ENCODE measurements at regions of chr13 and their contacts with region 1.

Region 1: DNA sequence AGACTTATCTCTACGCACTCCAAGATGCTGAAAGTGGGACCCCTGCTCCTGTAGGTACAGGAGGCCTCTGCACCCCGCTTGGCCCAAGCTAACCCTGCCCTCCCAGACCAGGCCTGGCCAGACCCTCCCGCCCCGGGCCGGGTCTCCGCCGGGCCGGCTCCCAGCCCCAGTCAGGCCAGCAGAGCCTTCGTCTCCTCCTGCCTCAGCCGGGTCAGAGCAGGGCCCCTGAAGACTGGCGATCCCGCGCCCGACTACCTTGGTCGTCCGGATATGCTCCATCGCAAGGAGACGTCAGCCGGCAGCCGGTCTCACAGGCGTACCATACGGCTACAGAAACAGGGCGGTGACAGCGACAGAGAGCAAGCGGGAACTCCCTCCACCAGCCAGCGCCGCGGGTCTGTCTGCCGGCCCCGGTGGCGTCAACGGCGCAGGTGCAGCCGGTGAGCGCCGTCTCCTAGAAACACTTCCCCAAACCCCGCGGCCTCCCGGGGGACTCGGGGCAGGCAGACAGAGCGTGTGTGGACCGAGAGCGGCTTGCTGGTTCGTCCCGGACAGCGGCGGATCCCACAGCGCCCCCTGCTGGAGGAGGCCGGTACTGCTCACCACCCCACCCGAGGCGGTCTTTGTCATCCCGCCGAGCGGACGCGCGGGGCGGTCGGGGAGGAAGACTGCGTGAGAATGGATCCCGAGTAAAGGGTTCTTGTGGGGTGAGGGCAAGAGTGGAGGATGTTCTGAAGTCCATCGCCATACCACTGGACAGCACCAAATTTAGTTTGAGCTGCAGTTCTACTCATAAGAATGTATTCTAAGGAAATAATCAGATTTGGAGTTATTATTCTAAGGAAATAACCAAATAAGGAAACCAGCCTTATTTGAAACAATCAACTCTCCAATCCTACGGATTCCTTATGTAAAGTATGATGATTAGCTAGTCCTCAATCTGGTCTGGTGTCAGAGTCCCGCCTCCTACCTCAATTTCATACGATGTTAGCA is at the start of gene MTMR6:
- DNase-seq: peak; percentile 95 to 99
- ATAC-seq: peak; percentile 100
- H3K4me3 ChIP-seq: peak within 1 kb of the TSS; percentile 77 to 95
- H3K27ac ChIP-seq: peak within 1 kb of the TSS in 1 of 2 donors; percentile 60
- H3K4me1 ChIP-seq: peaks cover 0 to 3% of the 10 kb centered on the region in 2 donors
- H3K27me3 ChIP-seq: peaks cover 0 to 2% of the 10 kb centered on the region in 2 donors
- total RNA-seq, gene MTMR6: 18.2 to 20.7 TPM

Region 2: GRCh38 chr13:25262261-25262660 is 25.0 kb before region 1 on chr13:
- intact Hi-C with region 1: loop called in 1 of 2 experiments (anchors 2 kb)
- DNase-seq: no peak
- ATAC-seq: no peak
- H3K4me3 ChIP-seq: no peak overlapping the region
- H3K27ac ChIP-seq: no peak overlapping the region
- H3K4me1 ChIP-seq: no peaks in the 10 kb centered on the region
- H3K27me3 ChIP-seq: no peaks in the 10 kb centered on the region

Region 3: GRCh38 chr13:25301347-25302047 is 14.2 kb after region 1 on chr13 and contains the start of gene NUP58:
- intact Hi-C with region 1: loop called in 1 of 2 experiments (anchors 1 kb)
- DNase-seq: peak; percentile 98
- ATAC-seq: peak; percentile 100
- H3K4me3 ChIP-seq: peak within 1 kb of the TSS; percentile 65 to 73
- H3K27ac ChIP-seq: peak within 1 kb of the TSS in 1 of 2 donors; percentile 96
- H3K4me1 ChIP-seq: peaks cover 0 to 2% of the 10 kb centered on the region in 2 donors
- H3K27me3 ChIP-seq: no peaks in the 10 kb centered on the region
- total RNA-seq, gene NUP58: 36.5 to 43.1 TPM

Region 4: GRCh38 chr13:25406377-25406915 is 119.2 kb after region 1 on chr13:
- intact Hi-C with region 1: no loop called
- DNase-seq: no peak
- ATAC-seq: no peak
- H3K4me3 ChIP-seq: no peak overlapping the region
- H3K27ac ChIP-seq: no peak overlapping the region
- H3K4me1 ChIP-seq: no peaks in the 10 kb centered on the region
- H3K27me3 ChIP-seq: no peaks in the 10 kb centered on the region

Measured in aorta (tissue), 5 donors.